Ovary (tissue), 10 donors: ENCODE measurements at regions of chr7 and their contacts with region 1.

Region 1: DNA sequence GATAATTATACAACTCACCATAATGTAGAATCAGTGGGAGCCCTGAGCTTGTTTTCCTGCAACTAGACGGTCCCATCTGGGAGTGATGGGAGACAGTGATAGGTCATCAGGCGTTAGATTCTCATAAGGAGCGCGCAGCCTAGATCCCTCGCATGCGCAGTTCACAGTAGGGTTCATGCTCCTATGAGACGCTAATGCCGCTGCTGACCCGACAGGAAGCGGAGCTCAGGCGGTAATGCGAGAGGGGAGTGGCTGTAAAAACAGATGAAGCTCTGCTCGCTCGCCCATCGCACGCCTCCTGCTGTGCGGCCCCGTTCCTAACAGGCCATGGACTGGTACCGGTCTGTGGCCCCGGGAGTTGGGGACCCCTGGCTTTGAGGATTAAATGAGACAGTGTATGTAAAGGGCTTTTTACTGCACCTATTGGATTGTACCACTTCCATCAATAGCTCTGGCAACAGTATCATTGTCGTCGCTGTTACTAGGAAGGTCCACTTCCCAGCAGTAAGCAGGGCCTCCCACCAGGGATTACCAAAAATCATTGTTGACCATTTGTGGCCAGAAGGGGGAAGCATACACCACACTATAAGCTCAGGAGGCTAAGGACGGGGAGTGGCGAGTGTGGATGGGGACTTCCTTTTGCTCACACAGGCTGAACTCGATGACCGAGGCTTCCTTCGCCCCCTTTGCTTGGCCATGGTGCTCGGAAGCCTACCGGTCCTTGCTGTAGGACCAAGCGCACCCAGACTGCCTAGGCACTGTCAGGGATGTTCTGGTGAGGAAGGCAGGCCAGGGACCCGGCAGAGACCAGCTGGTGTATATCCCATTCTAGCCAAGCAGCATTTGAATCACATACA is 26.4 kb downstream of the AKR1B1 start:
- DNase-seq: peak; percentile 79 to 86 (median 82)
- H3K4me3 ChIP-seq: peak overlapping the region; percentile 32
- H3K27ac ChIP-seq: peak overlapping the region in 1 of 2 donors; percentile 72
- H3K4me1 ChIP-seq: peaks cover 4% of the 10 kb centered on the region
- H3K27me3 ChIP-seq: no peaks in the 10 kb centered on the region
- CTCF ChIP-seq: peak; percentile 58 to 94 (median 86)
- EP300 ChIP-seq: no peak
- POLR2A ChIP-seq: peak; percentile 12

Region 2: DNA sequence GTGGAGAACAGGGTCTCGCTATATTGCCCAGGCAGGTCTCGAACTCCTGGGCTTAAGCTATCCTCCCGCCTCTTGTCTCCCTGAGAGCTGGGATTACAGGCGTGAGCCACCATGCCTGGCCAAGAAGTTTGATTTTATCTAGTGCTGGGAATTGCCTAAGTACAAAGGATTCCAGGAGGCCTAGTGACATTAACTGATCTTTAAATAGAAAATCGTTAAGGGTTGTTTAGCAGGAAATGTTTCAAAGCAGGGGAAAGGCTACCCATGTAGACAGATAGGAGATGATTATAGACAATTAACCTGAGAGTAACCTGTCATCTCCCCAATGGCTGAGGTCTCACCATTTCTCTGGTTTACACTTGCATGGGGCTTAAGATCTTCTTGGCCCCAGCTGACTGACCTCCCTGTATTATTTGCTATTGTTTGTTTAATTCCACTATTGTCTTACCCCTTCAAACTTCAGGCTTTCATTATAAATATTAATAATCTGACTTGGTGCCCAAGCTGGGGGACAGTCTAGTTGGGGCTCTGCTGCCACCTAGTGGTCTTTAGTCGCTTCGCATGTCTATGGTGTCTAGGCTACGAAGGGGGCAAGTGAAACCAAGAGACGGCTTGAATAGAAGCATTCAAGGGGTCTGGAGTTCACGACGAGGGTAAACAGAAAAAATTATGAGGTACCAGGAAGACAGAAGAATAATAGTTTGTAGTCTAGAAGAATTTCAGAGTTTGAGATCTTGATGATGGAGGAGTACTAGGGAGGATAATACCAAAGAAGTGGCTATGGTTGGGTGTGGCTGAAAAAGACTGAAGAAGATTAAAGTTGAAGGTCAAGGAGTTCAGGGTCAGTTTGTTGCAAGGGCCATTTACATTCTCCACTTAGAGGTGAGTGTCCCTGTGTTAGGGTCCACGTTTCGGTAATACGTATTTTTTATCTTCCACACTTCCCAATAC is 173.7 kb after region 1 on chr7:
- intact Hi-C with region 1: loop called (anchors 2 to 5 kb)
- DNase-seq: peak; percentile 34 to 74 (median 66)
- H3K4me3 ChIP-seq: no peak overlapping the region
- H3K27ac ChIP-seq: no peak overlapping the region
- H3K4me1 ChIP-seq: no peaks in the 10 kb centered on the region
- H3K27me3 ChIP-seq: no peaks in the 10 kb centered on the region
- CTCF ChIP-seq: peak; percentile 63 to 79 (median 69)
- EP300 ChIP-seq: no peak
- POLR2A ChIP-seq: no peak